Mammary epithelial cell (primary cell): ENCODE measurements at regions of chr22 and their contacts with region 1.

Region 1: DNA sequence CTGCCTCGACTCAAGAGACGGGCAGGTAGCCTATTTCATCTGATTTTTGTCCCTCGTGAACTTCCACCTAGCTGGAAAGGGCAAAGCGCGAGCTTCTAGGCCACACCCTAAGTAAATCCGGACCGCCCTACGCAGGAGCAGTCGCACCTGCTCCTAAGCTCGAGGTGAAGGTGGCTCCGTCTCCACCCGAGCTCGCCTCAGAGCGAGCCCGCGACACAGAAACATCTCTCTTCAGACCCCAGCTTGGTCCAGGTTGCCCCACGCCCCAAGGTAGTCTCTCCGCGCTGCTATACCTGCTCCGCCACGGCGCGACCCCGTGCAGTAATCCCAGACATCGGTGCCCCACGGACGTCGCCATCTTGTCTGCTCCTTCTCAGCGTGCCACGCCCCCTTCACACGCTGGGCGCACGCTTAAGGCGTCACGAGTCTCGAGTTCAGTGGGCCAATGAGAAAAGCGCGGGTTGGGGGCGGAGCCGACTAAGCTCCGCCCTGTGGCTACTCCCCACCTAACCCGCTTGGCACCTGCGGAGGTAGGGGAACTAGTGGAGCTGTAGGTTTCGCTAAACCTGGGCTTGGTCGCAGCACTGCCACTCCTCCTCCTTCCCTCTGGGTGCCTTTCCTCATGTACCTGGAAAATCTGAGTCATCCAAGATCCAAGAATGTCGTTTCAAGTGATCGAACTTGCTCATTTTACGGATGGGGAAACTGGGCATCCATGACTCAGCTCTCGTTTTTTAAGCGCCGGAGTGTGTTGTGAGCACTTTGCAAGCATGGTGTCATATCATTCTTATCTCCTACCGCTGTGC is at the start of gene PISD:
- DNase-seq: peak; percentile 98
- H3K4me3 ChIP-seq: peak within 1 kb of the TSS; percentile 65 to 96 (median 88)
- H3K27ac ChIP-seq: peak within 1 kb of the TSS; percentile 100
- H3K4me1 ChIP-seq: peaks cover 31% of the 10 kb centered on the region
- H3K27me3 ChIP-seq: no peaks in the 10 kb centered on the region
- CTCF ChIP-seq: no peak
- total RNA-seq, gene PISD: 53.7 to 67.8 TPM

Region 2: DNA sequence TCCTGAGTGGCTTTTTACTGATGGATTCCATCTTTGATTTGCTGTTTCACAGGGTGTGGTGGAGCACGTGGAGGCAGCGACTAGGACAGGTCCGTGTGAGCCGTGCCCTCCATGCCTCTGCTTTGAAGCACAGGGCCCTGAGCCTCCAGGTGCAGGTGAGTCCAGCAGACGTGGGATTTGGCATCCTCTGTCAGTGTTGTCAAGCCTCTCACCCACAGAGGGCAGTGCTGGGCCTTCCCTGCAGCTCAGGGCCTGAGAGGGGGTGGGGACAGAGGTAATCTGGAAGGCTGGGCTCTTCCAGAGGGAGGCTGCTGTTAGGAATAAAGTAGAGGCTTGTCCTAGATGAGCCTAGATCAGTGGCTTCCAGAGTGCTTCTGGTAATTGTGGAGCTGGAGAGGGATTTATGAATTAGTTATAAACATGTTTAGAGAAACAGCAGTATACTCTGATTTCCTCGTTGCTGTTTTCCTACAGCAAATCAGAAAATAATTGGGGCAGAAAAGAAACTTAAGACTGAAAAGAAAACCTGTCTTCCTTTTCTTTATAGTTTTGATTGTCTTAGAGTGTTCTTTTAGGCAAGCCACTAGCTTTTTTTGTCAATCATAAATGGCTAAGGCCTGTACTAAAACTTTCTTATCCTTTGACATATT is 100.7 kb before region 1 on chr22:
- CTCF ChIA-PET with region 1: no interaction called
- dilution Hi-C with region 1: no loop called
- in situ Hi-C with region 1: no loop called
- intact Hi-C with region 1: loop called (anchors 1 kb)
- DNase-seq: peak; percentile 70
- H3K4me3 ChIP-seq: no peak overlapping the region
- H3K27ac ChIP-seq: no peak overlapping the region
- H3K4me1 ChIP-seq: no peaks in the 10 kb centered on the region
- H3K27me3 ChIP-seq: no peaks in the 10 kb centered on the region
- CTCF ChIP-seq: peak; percentile 76 to 94

Region 3: DNA sequence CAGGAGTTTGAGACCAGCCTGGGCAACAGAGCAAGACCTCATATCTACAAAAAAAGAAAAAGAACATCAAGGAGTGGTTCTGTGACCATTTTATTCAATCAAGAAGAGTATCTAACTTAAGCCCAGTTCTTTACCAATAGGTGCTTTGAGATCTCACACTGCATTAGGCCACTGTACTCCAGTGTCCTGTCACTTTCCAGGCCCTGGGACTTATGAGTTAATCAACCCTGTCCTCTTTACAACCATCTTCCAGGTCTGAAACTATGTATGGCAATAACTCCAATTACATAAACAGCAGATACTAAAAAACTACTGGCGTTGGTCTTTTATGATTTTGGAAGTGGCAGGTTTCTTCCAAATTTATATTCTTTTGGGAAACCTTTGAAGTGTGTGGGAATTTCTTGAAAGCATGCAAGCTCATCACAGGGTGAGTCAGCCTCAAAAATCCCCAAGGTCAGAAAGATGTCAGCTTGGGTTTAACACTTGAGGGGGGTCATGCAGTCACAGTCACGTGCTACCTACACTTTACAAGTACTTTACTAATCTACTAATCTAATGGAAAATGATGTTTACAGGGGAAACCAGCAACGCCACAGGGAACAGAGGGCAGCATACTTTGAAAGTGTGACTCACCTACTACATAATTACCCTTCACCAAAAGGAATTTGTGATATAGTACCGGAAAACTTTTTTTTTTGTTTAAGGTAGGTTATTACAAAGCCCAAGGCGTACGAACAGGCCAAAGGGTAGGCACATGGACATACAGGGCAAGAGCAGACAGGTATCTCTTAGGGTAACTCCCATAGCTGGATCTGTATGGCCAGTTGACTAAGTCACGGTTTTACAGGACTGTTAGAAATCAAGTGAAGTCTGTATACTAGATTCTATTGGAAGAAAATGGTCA is 15.6 kb before region 1 on chr22:
- CTCF ChIA-PET with region 1: interaction called, 4 read pairs
- dilution Hi-C with region 1: no loop called
- in situ Hi-C with region 1: no loop called
- intact Hi-C with region 1: loop called (anchors 1 kb)
- DNase-seq: peak; percentile 99
- H3K4me3 ChIP-seq: no peak overlapping the region
- H3K27ac ChIP-seq: peak overlapping the region; percentile 95
- H3K4me1 ChIP-seq: peaks cover 47% of the 10 kb centered on the region
- H3K27me3 ChIP-seq: no peaks in the 10 kb centered on the region
- CTCF ChIP-seq: no peak

Region 4: GRCh38 chr22:31734512-31734911 is 72.5 kb after region 1 on chr22:
- CTCF ChIA-PET with region 1: no interaction called
- dilution Hi-C with region 1: no loop called
- in situ Hi-C with region 1: no loop called
- intact Hi-C with region 1: no loop called
- DNase-seq: peak; percentile 80
- H3K4me3 ChIP-seq: no peak overlapping the region
- H3K27ac ChIP-seq: peak overlapping the region; percentile 37
- H3K4me1 ChIP-seq: peaks cover 11% of the 10 kb centered on the region
- H3K27me3 ChIP-seq: no peaks in the 10 kb centered on the region
- CTCF ChIP-seq: no peak

Region 5: GRCh38 chr22:31749636-31750364 is 87.7 kb after region 1 on chr22 and contains the start of gene PRR14L:
- CTCF ChIA-PET with region 1: no interaction called
- dilution Hi-C with region 1: loop called (anchors 5 kb)
- in situ Hi-C with region 1: loop called in 1 of 2 experiments (anchors 10 kb)
- intact Hi-C with region 1: loop called (anchors 1 kb)
- DNase-seq: peak; percentile 95
- H3K4me3 ChIP-seq: peak within 1 kb of the TSS; percentile 70 to 84 (median 72)
- H3K27ac ChIP-seq: peak within 1 kb of the TSS; percentile 73
- H3K4me1 ChIP-seq: peaks cover 23% of the 10 kb centered on the region
- H3K27me3 ChIP-seq: no peaks in the 10 kb centered on the region
- CTCF ChIP-seq: peak in 1 of 2 donors; percentile 3
- total RNA-seq, gene PRR14L: 28.7 to 39.3 TPM

Region 6: GRCh38 chr22:31943976-31944699 is 282.1 kb after region 1 on chr22 and contains the start of gene YWHAH:
- CTCF ChIA-PET with region 1: interaction called, 10 read pairs
- dilution Hi-C with region 1: no loop called
- in situ Hi-C with region 1: no loop called
- intact Hi-C with region 1: loop called (anchors 1 kb)
- DNase-seq: peak; percentile 91
- H3K4me3 ChIP-seq: peak within 1 kb of the TSS; percentile 81 to 92 (median 91)
- H3K27ac ChIP-seq: peak within 1 kb of the TSS; percentile 86
- H3K4me1 ChIP-seq: peaks cover 21% of the 10 kb centered on the region
- H3K27me3 ChIP-seq: no peaks in the 10 kb centered on the region
- CTCF ChIP-seq: no peak
- total RNA-seq, gene YWHAH: 153 to 166 TPM

Region 7: GRCh38 chr22:31962392-31963125 is 300.5 kb after region 1 on chr22:
- CTCF ChIA-PET with region 1: no interaction called
- dilution Hi-C with region 1: loop called (anchors 5 kb)
- in situ Hi-C with region 1: loop called (anchors 10 kb)
- intact Hi-C with region 1: no loop called
- DNase-seq: no peak
- H3K4me3 ChIP-seq: no peak overlapping the region
- H3K27ac ChIP-seq: no peak overlapping the region
- H3K4me1 ChIP-seq: no peaks in the 10 kb centered on the region
- H3K27me3 ChIP-seq: no peaks in the 10 kb centered on the region
- CTCF ChIP-seq: no peak

Region 8: GRCh38 chr22:32080904-32081303 is 418.9 kb after region 1 on chr22:
- CTCF ChIA-PET with region 1: no interaction called
- dilution Hi-C with region 1: no loop called
- in situ Hi-C with region 1: no loop called
- intact Hi-C with region 1: loop called (anchors 2 kb)
- DNase-seq: peak; percentile 66
- H3K4me3 ChIP-seq: no peak overlapping the region
- H3K27ac ChIP-seq: no peak overlapping the region
- H3K4me1 ChIP-seq: peaks cover 12% of the 10 kb centered on the region
- H3K27me3 ChIP-seq: no peaks in the 10 kb centered on the region
- CTCF ChIP-seq: peak; percentile 89 to 93